Posterior cingulate gyrus (tissue), 11 donors: ENCODE measurements at regions of chr9 and their contacts with region 1.

Region 1: GRCh38 chr9:354453-354852 is 139.8 kb downstream of the DOCK8 start:
- DNase-seq: no peak

Region 2: GRCh38 chr9:489198-490197 is 135.0 kb after region 1 on chr9:
- intact Hi-C with region 1: no loop called
- DNase-seq: no peak

Region 3: GRCh38 chr9:806285-807156 is 452.1 kb after region 1 on chr9:
- intact Hi-C with region 1: loop called (anchors 10 kb)
- DNase-seq: no peak